Heart left ventricle (tissue), 16 donors: ENCODE measurements at regions of chr16 and their contacts with region 1.

Region 1: DNA sequence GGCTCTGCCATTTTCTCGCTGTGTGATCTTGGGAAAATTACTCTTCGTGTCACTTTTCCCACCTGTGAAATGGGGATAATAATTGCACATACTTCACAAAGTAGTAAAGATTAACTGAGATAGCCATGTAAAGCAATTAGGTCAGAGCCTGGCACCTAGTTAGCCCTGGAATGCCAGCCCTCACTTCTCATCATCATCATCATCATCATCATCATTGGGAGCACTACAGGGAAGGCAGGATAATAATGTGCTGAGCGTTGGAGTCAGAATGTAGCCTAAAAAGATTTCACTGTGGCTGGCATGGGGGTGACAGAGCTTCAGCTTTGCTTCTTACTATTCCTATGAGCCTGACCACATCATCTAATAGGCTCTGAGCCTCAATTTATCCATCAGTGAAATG is 362.6 kb downstream of the TOX3 start:
- DNase-seq: no peak
- ATAC-seq: no peak
- H3K4me3 ChIP-seq: no peak overlapping the region
- H3K27ac ChIP-seq: no peak overlapping the region
- H3K4me1 ChIP-seq: no peaks in the 10 kb centered on the region
- H3K27me3 ChIP-seq: no peaks in the 10 kb centered on the region
- CTCF ChIP-seq: no peak
- POLR2A ChIP-seq: no peak

Region 2: GRCh38 chr16:52090080-52090479 is 94.3 kb before region 1 on chr16:
- intact Hi-C with region 1: no loop called
- DNase-seq: no peak
- ATAC-seq: no peak
- H3K4me3 ChIP-seq: no peak overlapping the region
- H3K27ac ChIP-seq: no peak overlapping the region
- H3K4me1 ChIP-seq: no peaks in the 10 kb centered on the region
- H3K27me3 ChIP-seq: no peaks in the 10 kb centered on the region
- CTCF ChIP-seq: no peak
- POLR2A ChIP-seq: no peak

Region 3: GRCh38 chr16:53014287-53014686 is 830.0 kb after region 1 on chr16:
- intact Hi-C with region 1: loop called in 1 of 10 experiments (anchors 10 kb)
- DNase-seq: no peak
- ATAC-seq: no peak
- H3K4me3 ChIP-seq: no peak overlapping the region
- H3K27ac ChIP-seq: no peak overlapping the region
- H3K4me1 ChIP-seq: no peaks in the 10 kb centered on the region
- H3K27me3 ChIP-seq: peaks cover 0 to 4% (median 0%) of the 10 kb centered on the region in 9 donors
- CTCF ChIP-seq: no peak
- POLR2A ChIP-seq: no peak